Mammary epithelial cell (primary cell): ENCODE measurements at regions of chr20 and their contacts with region 1.

Region 1: DNA sequence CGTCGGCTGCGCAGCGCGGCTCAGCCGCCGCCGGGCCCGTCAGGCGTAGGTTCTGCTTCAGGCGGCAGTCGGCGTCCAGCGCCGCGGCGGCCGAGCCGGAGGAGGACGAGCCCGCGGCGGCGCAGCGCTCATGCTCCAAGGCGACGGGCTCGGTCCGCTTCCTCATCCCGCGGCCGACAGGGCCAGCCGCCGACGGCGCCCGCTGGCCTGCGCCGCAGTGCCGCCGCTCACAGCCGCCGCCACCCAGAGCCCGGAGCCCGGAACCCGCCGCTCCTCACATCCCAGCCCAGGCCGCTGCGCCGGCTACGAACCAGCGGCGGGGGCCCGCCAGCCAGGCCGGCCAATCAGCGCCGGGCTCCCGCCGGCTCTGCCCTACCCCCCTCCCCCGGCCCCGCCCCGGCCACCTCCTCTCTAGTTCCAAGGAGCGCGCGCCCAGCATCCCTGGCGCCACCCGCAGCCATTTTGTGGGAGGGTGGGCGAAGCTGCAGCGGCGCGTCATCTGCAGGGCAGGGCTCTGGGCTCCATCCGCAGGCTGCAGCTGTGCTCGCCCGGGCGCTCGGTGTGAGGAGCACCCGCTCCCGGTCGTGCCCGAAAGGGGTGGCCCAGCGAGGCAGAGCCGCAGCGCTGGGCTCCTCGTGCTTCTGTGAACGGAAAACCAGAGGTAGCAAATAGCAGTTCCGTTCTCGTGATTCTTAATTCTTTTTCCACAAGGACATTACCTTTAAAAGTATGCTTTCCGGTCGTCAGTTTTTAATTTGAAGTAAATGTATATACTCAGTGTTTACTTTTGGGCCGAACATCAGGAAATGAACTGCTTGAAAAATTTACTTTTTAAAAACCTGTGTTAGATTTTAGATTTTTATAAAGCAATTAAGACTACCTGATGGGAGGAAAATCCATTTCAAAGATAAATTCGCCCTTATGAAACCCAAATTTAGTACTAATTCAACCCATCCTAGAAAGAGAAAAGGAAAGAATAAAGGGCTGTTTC is at the start of gene ABHD12:
- DNase-seq: peak; percentile 97
- H3K4me3 ChIP-seq: peak within 1 kb of the TSS; percentile 63 to 97 (median 68)
- H3K27ac ChIP-seq: peak within 1 kb of the TSS; percentile 44
- H3K4me1 ChIP-seq: peaks cover 7% of the 10 kb centered on the region
- H3K27me3 ChIP-seq: no peaks in the 10 kb centered on the region
- CTCF ChIP-seq: no peak
- total RNA-seq, gene ABHD12: 21.2 to 21.6 TPM

Region 2: DNA sequence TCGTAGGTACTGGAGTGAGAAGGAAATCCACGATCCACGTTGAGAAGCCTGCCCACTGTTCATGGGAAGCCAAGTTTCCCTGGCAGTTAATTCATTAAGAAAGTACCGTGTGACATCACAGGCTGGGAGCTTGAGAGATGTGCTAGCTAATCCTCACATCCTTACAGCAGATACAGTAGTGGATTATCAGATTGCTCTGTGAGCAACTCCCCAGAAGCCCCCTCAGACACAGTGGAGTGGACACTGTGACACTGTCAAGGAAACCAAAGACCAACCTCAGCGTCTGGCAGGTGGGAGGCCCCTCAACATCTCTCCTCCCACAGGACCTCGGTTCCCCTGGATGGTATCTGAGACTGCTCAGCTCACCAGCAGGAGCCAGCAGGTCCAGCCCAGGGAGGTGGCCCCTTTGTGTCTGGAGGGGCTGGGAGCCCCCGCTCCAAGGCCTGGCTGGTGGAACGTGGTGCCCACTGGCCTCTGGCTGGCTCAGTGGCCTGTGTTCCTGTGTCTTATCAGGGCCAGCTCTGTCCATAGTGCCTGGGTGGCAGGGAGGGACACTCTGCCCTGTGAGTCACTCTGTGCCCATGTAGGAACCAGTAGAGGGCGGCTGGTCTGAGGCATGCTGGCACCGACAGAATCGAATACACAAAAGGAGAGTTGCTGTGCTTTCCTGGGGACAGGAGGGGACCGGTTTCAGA is 135.7 kb before region 1 on chr20:
- CTCF ChIA-PET with region 1: no interaction called
- dilution Hi-C with region 1: no loop called
- in situ Hi-C with region 1: loop called in 1 of 2 experiments (anchors 25 kb)
- intact Hi-C with region 1: no loop called
- DNase-seq: peak; percentile 35
- H3K4me3 ChIP-seq: no peak overlapping the region
- H3K27ac ChIP-seq: no peak overlapping the region
- H3K4me1 ChIP-seq: peaks cover 46% of the 10 kb centered on the region
- H3K27me3 ChIP-seq: no peaks in the 10 kb centered on the region
- CTCF ChIP-seq: peak in 1 of 2 donors; percentile 23

Region 3: DNA sequence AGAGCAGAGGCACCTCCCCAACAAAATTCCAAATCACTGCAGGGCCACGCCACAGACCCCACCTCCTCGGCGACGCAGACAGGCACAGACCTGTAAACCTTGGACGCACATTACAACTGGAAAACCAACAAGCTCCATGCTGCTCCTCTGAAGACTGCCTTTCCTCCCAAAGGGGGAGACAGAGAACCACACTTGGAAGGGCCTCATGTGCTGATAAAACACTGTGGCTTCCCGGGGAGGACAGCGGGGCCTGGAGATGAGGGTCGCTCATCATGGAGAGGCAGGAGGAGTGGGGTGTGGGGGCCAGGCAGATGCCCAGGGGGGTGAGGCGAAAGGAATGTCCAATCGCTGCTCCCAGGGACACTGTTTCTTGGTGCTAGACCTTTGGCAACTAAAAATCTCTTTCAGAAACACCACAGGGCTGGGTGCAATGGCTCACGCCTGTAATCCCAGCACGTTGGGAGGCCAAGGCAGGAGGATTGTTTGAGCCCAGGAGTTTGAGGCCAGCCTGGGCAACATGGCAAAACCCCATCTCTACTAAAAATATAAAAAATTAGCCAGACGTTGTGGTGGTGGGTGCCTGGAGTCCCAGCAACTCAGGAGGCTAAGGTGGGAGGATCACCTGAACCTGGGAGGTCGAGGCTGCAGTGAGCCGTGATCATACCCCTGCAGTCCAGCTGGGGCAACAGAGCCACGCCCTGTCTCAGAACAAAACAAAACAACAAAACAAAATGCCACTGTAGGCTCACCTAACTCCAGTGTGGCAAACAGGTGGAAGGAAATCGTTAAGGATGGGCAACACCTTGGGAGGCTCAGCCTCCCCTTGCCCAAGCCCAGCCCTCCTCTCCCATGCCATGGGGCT is 54.0 kb before region 1 on chr20:
- CTCF ChIA-PET with region 1: interaction called, 23 read pairs
- dilution Hi-C with region 1: no loop called
- in situ Hi-C with region 1: no loop called
- intact Hi-C with region 1: loop called (anchors 2 kb)
- DNase-seq: peak; percentile 76
- H3K4me3 ChIP-seq: no peak overlapping the region
- H3K27ac ChIP-seq: no peak overlapping the region
- H3K4me1 ChIP-seq: peaks cover 3% of the 10 kb centered on the region
- H3K27me3 ChIP-seq: no peaks in the 10 kb centered on the region
- CTCF ChIP-seq: peak; percentile 67 to 89

Region 4: DNA sequence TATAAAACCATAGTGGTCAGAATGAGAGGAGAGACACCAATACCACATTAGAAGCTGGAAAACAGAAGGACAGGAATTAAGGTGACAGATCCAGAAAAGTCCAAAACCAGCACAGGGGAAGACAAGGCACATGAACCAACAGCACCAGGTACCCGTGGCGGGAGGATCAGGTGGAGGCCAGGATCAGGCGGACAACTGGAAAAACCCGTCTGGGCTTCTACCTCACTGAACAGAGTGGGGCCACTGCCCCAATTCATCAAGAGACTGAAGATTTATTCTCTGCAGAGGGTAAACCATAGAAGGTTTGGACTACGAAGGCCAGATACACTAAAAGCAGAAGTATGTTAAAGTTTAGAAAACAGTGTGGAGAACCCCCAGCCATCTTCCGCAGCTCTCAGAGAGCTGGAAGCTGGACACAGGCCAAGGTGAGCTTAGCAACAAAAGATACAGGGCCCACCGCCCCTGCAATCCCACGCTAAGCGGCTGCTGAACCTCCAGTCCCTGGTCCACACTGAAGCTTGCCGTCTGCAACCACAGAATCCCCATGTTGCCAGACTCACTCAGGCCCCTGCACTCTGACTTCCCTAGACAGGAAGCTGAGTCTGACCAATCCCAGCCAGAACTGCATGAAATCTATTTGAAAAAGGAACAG is 30.1 kb before region 1 on chr20:
- CTCF ChIA-PET with region 1: no interaction called
- dilution Hi-C with region 1: no loop called
- in situ Hi-C with region 1: no loop called
- intact Hi-C with region 1: no loop called
- DNase-seq: no peak
- H3K4me3 ChIP-seq: no peak overlapping the region
- H3K27ac ChIP-seq: no peak overlapping the region
- H3K4me1 ChIP-seq: no peaks in the 10 kb centered on the region
- H3K27me3 ChIP-seq: no peaks in the 10 kb centered on the region
- CTCF ChIP-seq: no peak

Region 5: GRCh38 chr20:25407311-25408169 is 16.7 kb after region 1 on chr20 and contains the start of gene GINS1:
- CTCF ChIA-PET with region 1: no interaction called
- dilution Hi-C with region 1: no loop called
- in situ Hi-C with region 1: no loop called
- intact Hi-C with region 1: loop called (anchors 1 kb)
- DNase-seq: peak; percentile 89
- H3K4me3 ChIP-seq: peak within 1 kb of the TSS; percentile 77 to 82 (median 78)
- H3K27ac ChIP-seq: peak within 1 kb of the TSS; percentile 73
- H3K4me1 ChIP-seq: peaks cover 11% of the 10 kb centered on the region
- H3K27me3 ChIP-seq: no peaks in the 10 kb centered on the region
- CTCF ChIP-seq: no peak
- total RNA-seq, gene GINS1: 5.7 to 16.8 TPM